ENCODE measurements at regions of chr21 and their contacts with region 1.

Region 1: DNA sequence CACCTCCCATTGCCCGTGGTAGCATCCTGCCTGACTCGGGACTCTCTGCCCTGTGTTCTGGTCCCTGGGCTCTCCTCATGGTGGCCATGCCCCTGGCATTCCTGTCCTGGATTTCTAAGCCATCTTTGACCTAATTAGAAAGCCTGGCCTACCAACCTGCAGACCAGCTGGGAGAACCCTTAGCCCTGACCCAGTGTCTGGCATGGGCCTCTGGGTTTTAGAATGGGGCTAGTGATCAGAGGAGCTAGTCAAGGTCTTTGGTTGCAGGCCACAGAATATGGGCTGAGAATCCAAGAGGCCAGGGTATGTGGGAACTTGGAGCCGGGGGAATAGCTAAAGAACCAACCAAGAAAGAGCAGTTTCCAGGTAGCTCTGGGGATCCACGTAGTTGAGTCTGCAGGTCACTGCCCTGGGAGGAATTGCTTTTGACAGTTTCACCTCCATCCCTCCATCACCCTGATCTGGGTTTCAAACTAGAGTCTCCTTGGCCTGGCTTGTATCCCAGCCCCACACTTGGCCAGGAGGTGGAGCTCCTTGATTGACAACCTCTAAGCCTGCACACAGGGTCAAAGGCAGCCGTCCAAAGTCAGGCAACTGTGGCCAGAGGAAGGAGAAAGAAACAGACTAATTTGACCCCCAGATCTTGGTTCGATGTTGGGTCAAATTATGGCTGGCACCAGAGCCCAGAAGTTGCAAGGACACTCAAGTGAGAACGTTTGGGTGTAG is 54.7 kb upstream of the ABCG1 start:
- DNase-seq: peak; percentile 74
- H3K4me3 Mint-ChIP-seq: no peak overlapping the region
- H3K27ac Mint-ChIP-seq: no peak overlapping the region
- H3K4me1 Mint-ChIP-seq: peaks cover 34% of the 10 kb centered on the region
- H3K27me3 Mint-ChIP-seq: peaks cover 7% of the 10 kb centered on the region

Region 2: DNA sequence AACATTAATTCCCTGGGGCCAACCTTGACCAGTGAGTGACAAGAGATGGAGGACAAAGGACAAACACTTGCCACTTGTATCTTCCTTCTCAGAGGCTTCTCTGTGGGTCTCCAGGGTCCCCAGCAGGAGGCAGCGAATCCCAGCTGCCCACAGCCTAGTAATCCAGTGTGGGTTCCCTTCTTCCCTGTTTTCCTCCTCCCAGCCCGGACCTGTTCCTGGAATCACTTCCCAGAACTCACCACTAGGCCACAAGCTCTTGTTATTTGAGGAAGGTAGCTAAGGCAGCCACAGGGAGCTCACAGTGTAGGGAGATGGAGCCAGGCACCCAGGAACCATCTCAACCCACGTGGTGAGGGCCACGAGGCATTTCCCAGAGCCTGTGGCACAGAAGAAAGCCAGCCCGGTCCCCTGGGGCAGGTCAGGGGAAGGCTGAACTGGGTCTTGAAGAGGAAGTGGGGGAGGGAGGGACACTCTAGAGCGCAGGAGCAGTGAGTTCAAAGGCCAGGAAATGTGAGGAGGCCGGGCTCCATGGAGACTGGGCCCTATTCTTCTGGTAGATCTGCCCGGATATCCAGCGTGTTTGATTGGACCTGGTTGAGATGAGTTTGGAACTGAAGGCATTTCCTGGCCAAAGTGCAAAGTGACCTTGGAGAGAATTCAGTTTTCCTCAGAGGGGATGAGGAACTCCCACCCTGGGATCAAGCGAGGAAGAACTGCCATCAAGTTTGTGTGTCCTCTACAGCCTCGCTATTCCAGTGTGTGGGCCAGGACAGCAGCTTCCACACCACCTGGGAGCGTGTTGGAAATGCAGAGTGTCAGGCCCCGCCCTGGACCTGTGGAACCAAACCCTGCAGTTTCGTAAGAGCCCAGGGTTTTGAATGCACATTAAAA is 190.1 kb before region 1 on chr21:
- CTCF ChIA-PET with region 1: no interaction called
- DNase-seq: peak; percentile 57
- H3K4me3 Mint-ChIP-seq: no peak overlapping the region
- H3K27ac Mint-ChIP-seq: peak overlapping the region; percentile 81
- H3K4me1 Mint-ChIP-seq: peaks cover 20% of the 10 kb centered on the region
- H3K27me3 Mint-ChIP-seq: no peaks in the 10 kb centered on the region

Region 3: DNA sequence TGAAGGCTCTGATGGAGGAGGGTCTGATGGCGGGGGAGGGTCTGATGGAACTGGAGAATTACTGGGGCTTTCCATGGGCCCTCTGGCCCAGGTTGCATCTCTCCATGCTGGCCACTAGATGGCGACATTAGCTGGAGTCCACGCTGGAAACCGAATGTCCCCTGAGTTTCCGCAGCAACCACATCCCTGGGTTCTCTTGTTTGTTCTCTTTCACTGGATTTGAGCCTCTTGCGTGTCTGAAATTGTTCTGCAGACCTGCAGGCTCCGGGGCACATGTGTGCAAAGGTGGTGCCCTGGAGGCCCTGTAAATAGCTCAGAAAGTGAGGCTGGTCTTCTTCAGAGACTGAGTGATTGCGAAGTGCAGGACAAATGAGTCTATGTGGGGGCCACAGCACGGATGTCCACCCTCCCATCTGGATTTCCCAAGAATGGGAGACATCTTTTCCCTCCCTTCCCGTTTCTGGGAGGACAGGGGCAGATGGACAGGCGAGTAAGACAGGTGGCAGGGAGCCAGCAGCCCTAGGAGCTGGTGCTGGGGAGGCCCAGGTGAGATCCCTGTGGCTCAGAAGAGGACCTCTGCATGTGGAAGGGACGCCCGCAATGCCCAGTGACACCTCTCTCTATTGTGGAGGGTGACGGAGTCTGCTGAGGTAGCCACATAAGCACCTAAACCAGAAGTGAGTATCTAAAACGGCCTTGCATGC is 18.5 kb before region 1 on chr21:
- CTCF ChIA-PET with region 1: interaction called, 10 read pairs
- DNase-seq: peak; percentile 76
- H3K4me3 Mint-ChIP-seq: no peak overlapping the region
- H3K27ac Mint-ChIP-seq: no peak overlapping the region
- H3K4me1 Mint-ChIP-seq: peaks cover 4% of the 10 kb centered on the region
- H3K27me3 Mint-ChIP-seq: peaks cover 28% of the 10 kb centered on the region

Region 4: GRCh38 chr21:42238185-42238934 is 74.1 kb after region 1 on chr21:
- CTCF ChIA-PET with region 1: interaction called, 21 read pairs
- DNase-seq: peak; percentile 70
- H3K4me3 Mint-ChIP-seq: peak overlapping the region; percentile 43
- H3K27ac Mint-ChIP-seq: peak overlapping the region; percentile 77
- H3K4me1 Mint-ChIP-seq: peaks cover 70% of the 10 kb centered on the region
- H3K27me3 Mint-ChIP-seq: no peaks in the 10 kb centered on the region

Region 5: DNA sequence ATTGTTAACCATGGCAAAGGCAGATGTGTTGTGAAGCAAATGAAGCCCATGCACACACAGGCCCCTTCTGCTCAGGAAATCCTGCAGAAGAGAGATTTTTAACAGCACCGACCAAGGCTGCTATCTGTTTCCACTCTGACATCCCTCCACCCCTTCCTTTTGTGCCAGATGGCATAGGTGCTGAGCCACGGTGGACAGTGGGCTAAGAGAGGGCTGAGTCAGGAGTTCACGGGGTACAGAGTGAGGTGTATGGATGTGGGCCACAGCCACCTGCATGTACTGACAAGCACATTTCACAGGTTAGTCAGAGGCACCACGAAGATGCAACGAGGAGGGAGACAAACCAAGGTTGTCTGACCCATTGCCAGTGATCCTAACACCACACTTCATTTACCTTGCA is 322.3 kb after region 1 on chr21:
- CTCF ChIA-PET with region 1: no interaction called
- DNase-seq: no peak
- H3K4me3 Mint-ChIP-seq: no peak overlapping the region
- H3K27ac Mint-ChIP-seq: no peak overlapping the region
- H3K4me1 Mint-ChIP-seq: no peaks in the 10 kb centered on the region
- H3K27me3 Mint-ChIP-seq: peaks cover 60% of the 10 kb centered on the region